Activated B cell treated with CpG ODN at 0.5 μM for 24 hours (primary cell): ENCODE measurements at regions of chr1 and their contacts with region 1.

Region 1: GRCh38 chr1:226004396-226004795 is 5.3 kb upstream of the SDE2 start:
- DNase-seq: no peak
- ATAC-seq: peak; percentile 4
- H3K4me3 Mint-ChIP-seq: peak overlapping the region; percentile 61
- H3K27ac Mint-ChIP-seq: peak overlapping the region; percentile 84
- H3K4me1 Mint-ChIP-seq: peaks cover 51% of the 10 kb centered on the region
- H3K27me3 Mint-ChIP-seq: no peaks in the 10 kb centered on the region
- CTCF ChIP-seq: no peak

Region 2: GRCh38 chr1:226019572-226019971 is 15.2 kb after region 1 on chr1:
- CTCF ChIA-PET with region 1: no interaction called
- POLR2A ChIA-PET with region 1: interaction called, 9 read pairs
- intact Hi-C with region 1: loop called (anchors 2 kb)
- DNase-seq: no peak
- ATAC-seq: no peak
- H3K4me3 Mint-ChIP-seq: no peak overlapping the region
- H3K27ac Mint-ChIP-seq: no peak overlapping the region
- H3K4me1 Mint-ChIP-seq: peaks cover 4% of the 10 kb centered on the region
- H3K27me3 Mint-ChIP-seq: no peaks in the 10 kb centered on the region
- CTCF ChIP-seq: no peak

Region 3: GRCh38 chr1:226541631-226542622 is 537.5 kb after region 1 on chr1:
- CTCF ChIA-PET with region 1: no interaction called
- POLR2A ChIA-PET with region 1: no interaction called
- intact Hi-C with region 1: no loop called
- DNase-seq: no peak
- ATAC-seq: no peak
- H3K4me3 Mint-ChIP-seq: no peak overlapping the region
- H3K27ac Mint-ChIP-seq: no peak overlapping the region
- H3K4me1 Mint-ChIP-seq: no peaks in the 10 kb centered on the region
- H3K27me3 Mint-ChIP-seq: peaks cover 11% of the 10 kb centered on the region
- CTCF ChIP-seq: no peak